ENCODE measurements at regions of chr2 and their contacts with region 1.

Region 1: DNA sequence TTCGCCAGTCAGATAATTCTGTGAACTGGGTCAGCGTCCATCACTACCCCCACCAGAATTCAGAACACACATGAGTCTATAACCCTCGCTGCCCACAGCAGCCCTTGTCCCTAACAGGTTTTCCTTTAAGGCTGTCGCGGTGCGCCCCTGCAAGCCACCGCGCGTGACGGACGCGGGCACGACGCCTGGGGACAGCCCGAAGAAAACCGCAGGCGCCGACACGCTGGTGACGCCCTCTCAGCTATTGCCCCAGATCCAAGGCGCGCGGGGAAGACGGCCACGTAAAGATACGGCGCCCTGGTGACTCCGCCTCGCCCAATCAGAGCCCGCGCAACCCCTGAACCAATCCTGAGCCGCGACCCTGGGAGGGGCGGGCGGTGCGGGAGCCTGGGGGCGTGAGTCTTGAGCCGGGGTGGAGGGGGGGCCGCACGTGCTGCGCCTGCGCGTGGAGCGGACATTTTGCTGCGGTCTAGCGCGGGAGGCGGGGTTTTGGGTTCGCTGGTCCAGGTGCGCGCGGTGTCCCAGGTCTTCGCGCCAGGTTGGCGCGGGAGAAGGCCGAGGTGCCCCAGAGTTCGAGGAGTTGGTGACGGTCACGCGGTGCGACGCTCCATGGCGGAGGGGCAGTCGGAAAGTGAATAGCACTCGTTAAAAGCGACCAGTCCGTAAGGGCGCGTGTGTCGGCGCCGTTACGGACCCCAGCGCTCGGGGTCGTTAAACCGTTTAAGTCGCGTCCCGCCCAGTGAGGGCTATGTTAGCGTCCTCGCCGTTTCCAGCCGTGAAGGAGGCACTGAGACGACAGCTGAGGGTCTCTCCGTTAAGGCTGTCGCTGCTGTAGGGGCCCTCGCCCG is 15.9 kb downstream of the NMUR1 start:
- DNase-seq: peak; percentile 99
- H3K4me3 Mint-ChIP-seq: peak overlapping the region; percentile 81
- H3K27ac Mint-ChIP-seq: peak overlapping the region; percentile 88
- H3K4me1 Mint-ChIP-seq: peaks cover 25% of the 10 kb centered on the region
- H3K27me3 Mint-ChIP-seq: peaks cover 23% of the 10 kb centered on the region

Region 2: GRCh38 chr2:231563378-231563961 is 49.1 kb after region 1 on chr2:
- CTCF ChIA-PET with region 1: interaction called, 51 read pairs
- DNase-seq: peak; percentile 62
- H3K4me3 Mint-ChIP-seq: no peak overlapping the region
- H3K27ac Mint-ChIP-seq: no peak overlapping the region
- H3K4me1 Mint-ChIP-seq: peaks cover 9% of the 10 kb centered on the region
- H3K27me3 Mint-ChIP-seq: peaks cover 23% of the 10 kb centered on the region